K562 (cell line): ENCODE measurements at regions of chr2 and their contacts with region 1.

Region 1: DNA sequence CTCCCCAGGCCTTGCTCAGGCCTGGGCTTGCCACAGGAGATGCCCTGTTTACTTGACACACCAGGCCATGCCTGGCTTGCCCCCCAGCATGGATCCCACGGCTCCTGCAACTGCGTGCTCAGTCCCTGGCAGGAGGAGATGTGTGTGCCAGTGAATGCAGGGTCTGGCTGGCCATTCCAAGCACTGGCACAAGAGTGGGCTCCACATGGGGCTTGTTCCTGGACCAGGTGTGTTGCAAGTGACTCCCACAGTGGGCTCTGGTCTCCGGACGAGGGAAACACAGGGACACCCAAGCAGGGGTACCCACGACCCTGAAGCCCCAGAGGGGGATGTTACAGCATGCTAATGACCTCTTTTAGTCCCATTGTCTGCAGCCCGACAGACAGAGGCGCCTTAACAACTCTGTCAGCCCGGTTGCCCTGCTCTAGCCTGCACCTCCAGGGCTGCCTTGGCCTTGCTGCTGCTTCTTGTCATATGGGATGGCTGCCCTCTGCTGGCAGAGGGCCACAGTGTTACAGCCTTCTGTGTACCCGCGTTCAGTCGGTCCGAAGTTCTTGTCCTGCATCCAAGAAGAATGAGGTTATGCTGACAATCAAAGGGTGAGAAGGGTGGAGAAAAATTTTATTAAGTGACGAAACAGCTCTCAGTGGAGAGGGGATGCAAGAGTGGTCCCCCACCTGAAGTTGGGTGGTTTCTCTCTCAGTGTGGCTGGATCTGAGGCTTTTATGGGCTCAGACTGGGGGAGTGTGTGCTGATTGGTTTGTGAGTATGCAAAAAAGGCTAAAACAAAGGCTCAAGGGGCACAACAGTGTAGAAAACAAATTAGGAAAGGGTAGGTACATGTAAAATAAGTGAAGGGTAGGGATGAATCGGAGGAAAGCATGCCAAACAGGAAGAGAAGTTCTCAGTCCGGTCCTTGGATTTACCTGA is 180.4 kb downstream of the MBD5 start:
- DNase-seq: peak; percentile 25 to 80 (median 32)
- ATAC-seq: peak; percentile 100
- H3K4me3 ChIP-seq: no peak overlapping the region
- H3K27ac ChIP-seq: no peak overlapping the region
- H3K4me1 ChIP-seq: no peaks in the 10 kb centered on the region; a peak in 1 of 5 replicates
- H3K27me3 ChIP-seq: no peaks in the 10 kb centered on the region
- CTCF ChIP-seq: peak; percentile 70 to 87 (median 70)
- EP300 ChIP-seq: no peak
- POLR2A ChIP-seq: no peak
- RAD21 ChIP-seq: peak in 1 of 2 experiments; percentile 72; a peak in 3 of 4 replicates

Region 2: GRCh38 chr2:147989809-147990403 is 211.4 kb before region 1 on chr2:
- CTCF ChIA-PET with region 1: interaction called, 10 read pairs
- POLR2A ChIA-PET with region 1: no interaction called
- in situ Hi-C with region 1: loop called (anchors 10 kb)
- intact Hi-C with region 1: loop called (anchors 5 kb)
- DNase-seq: peak in 3 of 4 experiments; percentile 11 to 51 (median 39)
- ATAC-seq: peak; percentile 89
- H3K4me3 ChIP-seq: no peak overlapping the region
- H3K27ac ChIP-seq: no peak overlapping the region
- H3K4me1 ChIP-seq: no peaks in the 10 kb centered on the region
- H3K27me3 ChIP-seq: no peaks in the 10 kb centered on the region
- CTCF ChIP-seq: peak; percentile 37 to 98 (median 94); a peak in 5 of 6 replicates
- EP300 ChIP-seq: no peak
- POLR2A ChIP-seq: no peak
- RAD21 ChIP-seq: peak; percentile 86 to 87

Region 3: DNA sequence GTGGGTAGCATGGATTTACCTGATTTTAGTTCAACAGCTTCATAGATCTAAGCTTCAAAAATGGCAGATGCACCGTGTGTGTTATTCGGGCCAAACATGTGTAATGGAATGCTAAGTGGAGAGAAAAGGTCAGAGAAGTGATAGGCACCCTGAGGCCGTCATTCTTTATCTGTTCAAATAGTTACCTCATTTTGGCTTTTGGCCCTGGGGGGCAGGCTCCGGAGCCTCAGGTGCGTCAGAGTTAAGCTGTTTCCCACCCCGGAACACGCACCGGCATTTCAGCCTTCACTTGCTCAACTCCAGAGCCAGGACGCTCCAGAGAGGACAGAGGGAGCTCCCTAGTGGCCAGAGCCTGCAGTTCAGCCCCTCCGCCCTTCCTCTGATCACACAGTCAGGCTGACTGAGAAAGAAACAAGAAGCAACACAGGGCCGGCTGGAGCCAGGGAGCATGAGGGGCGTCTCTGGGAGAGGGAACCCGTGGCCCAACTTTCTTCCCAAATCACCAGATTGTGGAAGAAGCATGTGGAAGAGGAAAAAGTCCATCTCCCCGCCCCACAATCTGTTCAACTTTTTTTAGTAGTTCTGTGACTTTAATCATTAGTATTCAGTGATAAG is 308.1 kb after region 1 on chr2:
- CTCF ChIA-PET with region 1: no interaction called
- POLR2A ChIA-PET with region 1: no interaction called
- in situ Hi-C with region 1: no loop called
- intact Hi-C with region 1: loop called (anchors 5 kb)
- DNase-seq: peak; percentile 67 to 87 (median 77)
- ATAC-seq: peak; percentile 100
- H3K4me3 ChIP-seq: peak overlapping the region; percentile 31
- H3K27ac ChIP-seq: no peak overlapping the region
- H3K4me1 ChIP-seq: peaks cover 0 to 5% of the 10 kb centered on the region in 2 experiments; a peak in 1 of 5 replicates
- H3K27me3 ChIP-seq: peaks cover 0 to 1% of the 10 kb centered on the region in 2 experiments; a peak in 1 of 5 replicates
- CTCF ChIP-seq: peak; percentile 88 to 94 (median 91)
- EP300 ChIP-seq: no peak
- POLR2A ChIP-seq: no peak
- RAD21 ChIP-seq: peak; percentile 93 to 96